Activated CD4-positive, alpha-beta memory T cell treated with anti-CD3 and anti-CD28 coated beads for 36 hours (primary cell): ENCODE measurements at regions of chr7 and their contacts with region 1.

Region 1: DNA sequence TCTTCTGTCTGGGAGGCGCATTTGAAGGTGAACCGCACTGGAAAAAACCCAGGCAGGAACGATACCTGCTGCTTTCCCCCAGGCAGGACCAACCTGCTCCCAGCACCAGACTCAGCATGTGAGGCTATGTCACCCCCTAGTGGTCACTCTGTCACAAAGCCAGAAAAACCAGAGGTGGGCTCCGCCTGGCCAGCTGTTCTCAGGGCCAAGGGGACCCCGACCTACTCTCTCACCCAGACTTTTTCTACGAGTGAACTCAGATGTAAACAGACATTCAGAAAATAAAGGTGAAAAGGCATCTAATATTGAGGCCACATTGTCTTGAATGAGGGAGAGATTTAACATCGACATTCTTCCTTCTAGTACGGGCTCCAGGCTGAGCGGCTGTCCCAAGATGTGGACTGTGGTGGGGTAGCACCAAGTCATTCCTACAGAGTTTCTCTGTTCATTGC is 117.3 kb downstream of the PRKAG2 start:
- DNase-seq: peak; percentile 72
- H3K4me3 Mint-ChIP-seq: no peak overlapping the region
- H3K27ac Mint-ChIP-seq: no peak overlapping the region
- H3K4me1 Mint-ChIP-seq: peaks cover 19% of the 10 kb centered on the region
- H3K27me3 Mint-ChIP-seq: no peaks in the 10 kb centered on the region

Region 2: DNA sequence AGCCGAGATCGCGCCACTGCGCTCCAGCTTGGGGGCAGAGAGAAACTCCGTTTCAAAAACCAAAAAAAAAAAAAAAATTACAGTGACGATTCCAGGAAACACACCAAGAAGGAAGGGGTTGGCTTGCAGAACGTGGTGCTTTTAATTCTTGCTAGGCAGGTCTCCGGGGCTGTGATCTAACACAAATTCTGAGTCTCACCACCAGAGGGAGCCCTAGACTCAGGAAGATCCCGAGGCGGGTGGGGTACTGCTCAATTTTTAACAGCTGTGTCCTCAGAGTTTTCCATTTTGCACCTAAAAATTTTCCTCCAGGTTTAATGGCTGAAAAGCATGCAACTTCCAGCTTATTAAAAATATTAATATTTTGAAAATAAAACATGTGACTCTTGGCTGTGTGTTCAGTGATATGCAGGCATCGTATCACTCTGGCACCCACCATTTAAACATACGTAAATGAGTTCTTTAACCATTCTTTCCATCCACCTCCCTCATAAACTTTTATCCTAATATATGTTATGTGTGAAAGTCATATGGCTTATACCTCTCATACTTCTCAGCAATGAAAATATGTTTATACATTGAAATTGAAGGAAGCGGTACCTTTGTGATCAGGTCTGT is 444.5 kb before region 1 on chr7:
- CTCF ChIA-PET with region 1: interaction called, 9 read pairs
- POLR2A ChIA-PET with region 1: no interaction called
- intact Hi-C with region 1: loop called (anchors 10 kb)
- DNase-seq: peak; percentile 82
- H3K4me3 Mint-ChIP-seq: no peak overlapping the region
- H3K27ac Mint-ChIP-seq: peak overlapping the region; percentile 53
- H3K4me1 Mint-ChIP-seq: peaks cover 10% of the 10 kb centered on the region
- H3K27me3 Mint-ChIP-seq: no peaks in the 10 kb centered on the region

Region 3: DNA sequence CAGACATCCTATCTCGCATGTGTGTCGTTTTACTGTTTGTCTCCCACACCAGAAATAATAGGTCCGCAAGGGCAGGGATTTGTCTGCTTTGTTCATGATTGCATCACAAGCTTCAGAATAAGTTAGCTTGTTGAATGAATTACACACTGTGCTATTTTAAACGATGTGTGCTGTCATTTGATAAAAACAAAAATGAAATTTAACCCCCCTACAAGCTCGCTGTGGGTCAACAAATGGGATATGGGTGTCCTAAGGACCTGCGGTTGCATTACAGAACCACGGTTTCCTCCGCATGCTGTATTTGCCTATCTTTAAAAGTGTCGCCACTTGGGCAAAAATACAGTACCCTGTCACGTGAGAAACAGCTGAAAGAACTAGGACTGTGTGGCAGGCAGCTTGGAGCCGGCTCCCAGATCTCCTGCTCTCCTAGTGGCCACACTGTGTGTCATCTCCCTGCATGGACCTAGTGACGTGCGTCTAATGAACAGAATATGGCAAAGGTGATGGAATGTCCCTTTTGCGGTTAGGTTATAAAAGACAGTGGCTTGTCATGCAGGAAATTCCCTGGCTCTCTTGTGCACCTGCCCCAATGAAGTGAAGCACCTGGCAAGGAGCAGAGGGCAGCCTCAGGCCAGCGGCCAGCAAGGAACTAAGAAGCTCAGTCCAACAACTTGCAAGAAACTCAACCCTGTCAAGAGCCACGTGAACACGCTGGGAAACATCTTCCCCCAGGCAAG is 286.8 kb before region 1 on chr7:
- CTCF ChIA-PET with region 1: interaction called, 5 read pairs
- POLR2A ChIA-PET with region 1: no interaction called
- intact Hi-C with region 1: loop called (anchors 5 kb)
- DNase-seq: no peak
- H3K4me3 Mint-ChIP-seq: no peak overlapping the region
- H3K27ac Mint-ChIP-seq: peak overlapping the region; percentile 67
- H3K4me1 Mint-ChIP-seq: peaks cover 48% of the 10 kb centered on the region
- H3K27me3 Mint-ChIP-seq: no peaks in the 10 kb centered on the region

Region 4: GRCh38 chr7:151570366-151570915 is 189.2 kb before region 1 on chr7:
- CTCF ChIA-PET with region 1: interaction called, 5 read pairs
- POLR2A ChIA-PET with region 1: no interaction called
- intact Hi-C with region 1: loop called (anchors 1 kb)
- DNase-seq: no peak
- H3K4me3 Mint-ChIP-seq: no peak overlapping the region
- H3K27ac Mint-ChIP-seq: no peak overlapping the region
- H3K4me1 Mint-ChIP-seq: no peaks in the 10 kb centered on the region
- H3K27me3 Mint-ChIP-seq: no peaks in the 10 kb centered on the region

Region 5: GRCh38 chr7:151744656-151745638 is 14.7 kb before region 1 on chr7:
- CTCF ChIA-PET with region 1: interaction called, 5 read pairs
- POLR2A ChIA-PET with region 1: no interaction called
- intact Hi-C with region 1: loop called (anchors 1 kb)
- DNase-seq: peak; percentile 80
- H3K4me3 Mint-ChIP-seq: no peak overlapping the region
- H3K27ac Mint-ChIP-seq: no peak overlapping the region
- H3K4me1 Mint-ChIP-seq: peaks cover 41% of the 10 kb centered on the region
- H3K27me3 Mint-ChIP-seq: no peaks in the 10 kb centered on the region